ENCODE measurements at regions of chr1 and their contacts with region 1.

Region 1: GRCh38 chr1:153922972-153923925 is at the start of gene GATAD2B:
- DNase-seq: peak; percentile 100
- H3K4me3 ChIP-seq: peak within 1 kb of the TSS; percentile 88 to 93 (median 89)
- H3K27ac ChIP-seq: peak within 1 kb of the TSS; percentile 82
- H3K4me1 ChIP-seq: peaks cover 26% of the 10 kb centered on the region
- H3K27me3 ChIP-seq: no peaks in the 10 kb centered on the region
- CTCF ChIP-seq: no peak
- total RNA-seq, gene GATAD2B: 13.7 to 52.7 TPM

Region 2: DNA sequence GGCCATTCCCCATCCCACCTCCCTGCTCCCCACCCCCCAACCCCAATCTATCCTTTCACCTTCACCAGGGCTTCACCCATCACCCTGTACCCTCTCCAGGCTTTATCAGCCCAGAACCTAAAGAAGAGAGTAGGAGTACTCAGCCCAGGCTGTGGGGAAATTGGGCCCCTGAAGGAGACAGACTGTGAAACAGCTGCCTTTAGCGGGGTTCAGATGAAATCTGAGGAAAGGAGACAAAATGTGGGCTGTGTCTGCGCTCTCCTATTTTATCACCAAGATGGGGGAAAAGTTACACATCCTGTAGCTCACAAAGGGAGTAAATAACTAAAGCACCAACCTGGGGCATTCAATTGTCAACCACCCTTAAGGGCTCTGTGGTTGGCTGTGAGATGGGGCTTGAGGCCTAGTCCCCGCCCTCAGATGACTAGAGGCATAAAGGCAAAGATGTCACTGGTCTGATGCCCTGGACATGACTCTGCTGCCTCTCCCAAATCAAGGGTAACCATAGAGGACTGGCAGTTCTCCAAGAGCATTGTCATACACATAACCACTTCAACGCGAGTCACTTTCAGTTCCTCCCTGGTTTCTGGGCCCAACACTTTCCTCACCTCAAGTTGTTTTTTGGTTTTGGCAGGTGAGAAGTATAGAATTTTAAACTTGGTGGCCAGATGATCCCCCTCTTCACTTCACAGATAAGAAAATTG is 118.1 kb before region 1 on chr1:
- CTCF ChIA-PET with region 1: no interaction called
- dilution Hi-C with region 1: loop called (anchors 5 kb)
- in situ Hi-C with region 1: no loop called
- intact Hi-C with region 1: loop called (anchors 5 kb)
- DNase-seq: peak; percentile 93
- H3K4me3 ChIP-seq: no peak overlapping the region
- H3K27ac ChIP-seq: peak overlapping the region; percentile 82
- H3K4me1 ChIP-seq: peaks cover 12% of the 10 kb centered on the region
- H3K27me3 ChIP-seq: no peaks in the 10 kb centered on the region
- CTCF ChIP-seq: no peak

Region 3: GRCh38 chr1:153816283-153816889 is 106.9 kb before region 1 on chr1:
- CTCF ChIA-PET with region 1: no interaction called
- dilution Hi-C with region 1: loop called (anchors 5 kb)
- in situ Hi-C with region 1: no loop called
- intact Hi-C with region 1: loop called (anchors 1 kb)
- DNase-seq: no peak
- H3K4me3 ChIP-seq: no peak overlapping the region
- H3K27ac ChIP-seq: no peak overlapping the region
- H3K4me1 ChIP-seq: no peaks in the 10 kb centered on the region
- H3K27me3 ChIP-seq: no peaks in the 10 kb centered on the region
- CTCF ChIP-seq: no peak

Region 4: DNA sequence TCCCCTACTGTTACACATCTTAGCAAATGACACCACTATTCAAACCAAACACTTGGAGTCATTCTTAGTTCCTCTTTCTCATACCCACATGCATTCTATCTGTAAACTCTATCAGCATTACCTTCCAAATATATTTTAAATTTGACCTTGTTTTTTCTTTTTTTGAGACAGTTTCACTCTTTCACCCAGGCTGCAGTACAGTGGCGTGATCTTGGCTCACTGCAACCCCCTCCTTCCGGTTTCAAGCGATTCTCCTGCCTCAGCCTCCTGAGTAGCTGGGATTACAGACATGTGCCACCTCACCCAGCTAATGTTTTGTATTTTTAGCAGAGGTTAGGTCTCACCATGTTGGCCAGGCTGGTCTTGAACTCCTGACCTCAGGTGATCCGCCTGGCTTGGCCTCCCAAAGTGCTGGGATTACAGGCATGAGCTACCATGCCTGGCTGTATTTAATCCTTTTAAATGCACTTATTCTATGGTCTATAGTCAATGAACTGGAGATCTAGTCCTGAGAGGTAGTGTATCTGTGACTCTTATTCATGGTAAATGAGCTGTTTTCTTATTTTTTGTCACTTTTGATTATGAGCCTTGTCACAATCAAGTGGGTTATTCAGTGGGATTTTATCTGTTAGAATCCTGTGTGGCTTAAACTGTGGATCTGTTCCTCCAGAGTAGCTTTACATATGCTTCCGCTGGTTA is 73.6 kb before region 1 on chr1:
- CTCF ChIA-PET with region 1: no interaction called
- dilution Hi-C with region 1: loop called (anchors 5 kb)
- in situ Hi-C with region 1: no loop called
- intact Hi-C with region 1: no loop called
- DNase-seq: no peak
- H3K4me3 ChIP-seq: no peak overlapping the region
- H3K27ac ChIP-seq: no peak overlapping the region
- H3K4me1 ChIP-seq: no peaks in the 10 kb centered on the region
- H3K27me3 ChIP-seq: no peaks in the 10 kb centered on the region
- CTCF ChIP-seq: no peak

Region 5: GRCh38 chr1:153888533-153888932 is 34.7 kb before region 1 on chr1:
- CTCF ChIA-PET with region 1: interaction called, 4 read pairs
- dilution Hi-C with region 1: loop called (anchors 5 kb)
- in situ Hi-C with region 1: no loop called
- intact Hi-C with region 1: no loop called
- DNase-seq: no peak
- H3K4me3 ChIP-seq: no peak overlapping the region
- H3K27ac ChIP-seq: no peak overlapping the region
- H3K4me1 ChIP-seq: no peaks in the 10 kb centered on the region
- H3K27me3 ChIP-seq: no peaks in the 10 kb centered on the region
- CTCF ChIP-seq: no peak

Region 6: DNA sequence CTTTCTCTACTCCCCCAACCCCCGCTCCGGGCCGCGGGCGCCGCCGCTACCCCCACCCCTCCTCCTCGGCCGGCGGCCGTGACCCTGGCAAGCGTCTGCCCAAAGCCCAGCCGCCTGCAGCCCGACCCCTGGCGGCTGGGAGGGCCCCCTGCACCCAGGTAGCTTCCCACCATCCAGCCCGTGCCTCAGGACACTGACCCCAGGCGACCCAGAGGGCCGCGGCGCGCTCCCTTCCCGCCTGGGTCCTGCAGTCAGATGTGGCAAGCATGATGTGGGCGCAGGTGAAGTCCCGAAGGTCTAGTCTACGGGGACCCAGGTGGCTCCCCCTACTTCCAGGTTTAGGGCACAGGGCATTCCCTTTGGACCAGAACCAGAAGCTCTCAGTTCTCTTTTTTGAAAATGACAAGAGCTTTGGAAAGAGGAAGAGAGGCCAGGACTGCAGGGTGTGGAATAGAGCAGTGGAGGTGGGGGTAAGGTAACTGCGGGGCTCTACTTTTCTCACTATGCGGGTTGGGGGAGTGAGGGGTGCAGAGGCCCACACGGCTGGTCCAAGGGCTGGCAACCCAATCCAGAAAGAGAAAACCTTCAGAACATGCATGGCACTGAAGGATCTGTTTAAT is 23.5 kb after region 1 on chr1 and contains the start of gene DENND4B:
- CTCF ChIA-PET with region 1: no interaction called
- dilution Hi-C with region 1: no loop called
- in situ Hi-C with region 1: no loop called
- intact Hi-C with region 1: loop called (anchors 1 kb)
- DNase-seq: peak; percentile 64
- H3K4me3 ChIP-seq: peak within 1 kb of the TSS; percentile 71 to 88 (median 79)
- H3K27ac ChIP-seq: peak within 1 kb of the TSS; percentile 65
- H3K4me1 ChIP-seq: peaks cover 8% of the 10 kb centered on the region
- H3K27me3 ChIP-seq: no peaks in the 10 kb centered on the region
- CTCF ChIP-seq: peak; percentile 72 to 90
- total RNA-seq, gene DENND4B: 12.3 to 36.9 TPM

Region 7: GRCh38 chr1:154157520-154158306 is 234.5 kb after region 1 on chr1:
- CTCF ChIA-PET with region 1: no interaction called
- dilution Hi-C with region 1: no loop called
- in situ Hi-C with region 1: no loop called
- intact Hi-C with region 1: no loop called
- DNase-seq: no peak
- H3K4me3 ChIP-seq: no peak overlapping the region
- H3K27ac ChIP-seq: no peak overlapping the region
- H3K4me1 ChIP-seq: no peaks in the 10 kb centered on the region
- H3K27me3 ChIP-seq: no peaks in the 10 kb centered on the region
- CTCF ChIP-seq: no peak